ENCODE measurements at regions of chr11 and their contacts with region 1.

Region 1: DNA sequence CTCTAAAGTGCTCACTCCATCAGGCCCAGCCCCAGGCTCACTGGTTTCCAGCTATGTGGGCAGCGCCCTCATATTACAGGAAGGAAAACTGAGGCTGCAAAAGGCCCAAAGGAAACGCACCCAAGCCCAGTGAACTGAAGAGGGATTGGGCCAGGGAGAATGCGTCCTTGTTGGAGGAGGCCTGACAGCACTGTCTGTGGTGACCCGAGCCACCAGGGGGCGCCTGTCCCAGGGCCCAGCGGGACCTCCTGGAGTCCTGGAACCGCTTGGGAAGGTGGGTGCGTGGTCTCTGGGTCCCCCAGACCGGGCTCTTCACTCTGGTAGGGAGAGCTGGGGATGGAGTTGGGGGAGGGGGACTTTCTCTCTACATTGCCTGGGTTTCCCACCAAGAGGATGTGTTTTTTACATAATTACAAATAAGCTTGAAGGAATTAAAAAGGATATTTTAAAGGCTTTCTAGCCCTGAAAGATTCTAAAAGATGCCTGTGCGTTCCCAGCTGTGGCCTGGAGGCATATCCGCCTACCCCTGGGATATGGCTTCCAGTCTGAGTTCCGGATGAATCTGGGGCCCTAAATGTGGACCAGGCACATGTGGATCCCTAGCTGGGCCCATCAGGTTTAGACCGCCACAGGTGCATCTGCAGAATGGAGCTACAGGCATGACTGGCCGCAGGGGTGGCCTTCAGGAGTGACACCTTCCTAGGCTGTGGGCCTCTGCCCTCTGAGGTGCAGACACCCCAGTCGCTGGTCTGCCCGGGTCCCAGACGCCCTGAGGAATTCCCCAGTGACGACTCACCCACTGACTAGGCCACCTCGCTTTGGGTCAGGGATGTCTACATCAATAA is 4.2 kb downstream of the SPI1 start:
- DNase-seq: peak; percentile 49 to 93
- H3K4me3 ChIP-seq: no peak overlapping the region
- H3K27ac ChIP-seq: no peak overlapping the region
- H3K4me1 ChIP-seq: peaks cover 0 to 5% (median 2%) of the 10 kb centered on the region in 4 experiments; a peak in 5 of 7 replicates
- H3K27me3 ChIP-seq: no peaks in the 10 kb centered on the region
- CTCF ChIP-seq: peak; percentile 90 to 97 (median 94)
- EP300 ChIP-seq: no peak
- POLR2A ChIP-seq: no peak
- RAD21 ChIP-seq: peak; percentile 60 to 73

Region 2: GRCh38 chr11:47348859-47349258 is 25.2 kb before region 1 on chr11:
- CTCF ChIA-PET with region 1: interaction called, 24 read pairs
- POLR2A ChIA-PET with region 1: no interaction called
- DNase-seq: no peak
- H3K4me3 ChIP-seq: no peak overlapping the region
- H3K27ac ChIP-seq: no peak overlapping the region
- H3K4me1 ChIP-seq: peaks cover 0 to 12% (median 5%) of the 10 kb centered on the region in 4 experiments; a peak in 6 of 7 replicates
- H3K27me3 ChIP-seq: no peaks in the 10 kb centered on the region
- CTCF ChIP-seq: peak in 2 of 3 experiments; percentile 26 to 37; a peak in 3 of 4 replicates
- EP300 ChIP-seq: no peak
- POLR2A ChIP-seq: no peak
- RAD21 ChIP-seq: peak; percentile 40 to 54; a peak in 3 of 4 replicates

Region 3: DNA sequence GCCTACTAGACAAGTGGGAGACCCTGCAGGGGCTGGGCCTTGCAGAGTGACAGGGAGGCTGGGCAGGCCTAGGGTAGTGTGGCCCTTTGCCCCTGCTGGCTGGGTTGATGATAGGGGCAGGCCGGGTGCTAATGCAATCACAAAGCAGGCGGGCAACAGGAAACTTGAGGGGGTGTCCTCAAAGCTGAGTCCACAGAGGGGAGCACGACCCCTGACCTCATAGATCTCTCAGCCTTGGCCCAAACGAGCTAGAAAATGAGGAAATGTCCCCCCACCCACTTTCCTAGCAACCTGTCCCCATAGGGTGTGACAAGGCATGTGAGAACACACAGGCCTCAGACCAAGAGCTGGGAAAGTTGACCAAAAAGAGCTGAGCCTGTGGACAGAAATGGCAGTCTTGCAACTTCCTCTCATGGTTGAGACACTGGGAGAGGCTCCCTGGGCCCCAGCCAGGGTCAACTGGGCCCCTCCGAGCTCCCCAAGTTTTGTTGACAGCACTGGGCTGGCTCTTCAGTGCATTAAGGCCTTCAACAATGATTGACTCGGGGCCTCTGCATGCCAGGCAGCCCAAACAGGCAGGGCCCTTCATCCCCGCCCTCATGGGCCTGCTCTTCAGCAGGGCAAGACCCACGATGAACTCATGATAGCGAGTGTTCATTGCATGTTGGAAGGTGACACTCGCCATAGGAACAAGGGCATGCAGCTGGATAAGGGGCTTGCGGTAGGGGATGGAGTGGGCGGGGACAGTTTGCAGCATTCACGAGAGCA is 14.0 kb after region 1 on chr11:
- CTCF ChIA-PET with region 1: interaction called, 78 read pairs
- POLR2A ChIA-PET with region 1: interaction called, 4 read pairs
- DNase-seq: no peak
- H3K4me3 ChIP-seq: no peak overlapping the region
- H3K27ac ChIP-seq: no peak overlapping the region; the same call in 1 of the 2 replicates
- H3K4me1 ChIP-seq: peaks cover 0 to 3% (median 0%) of the 10 kb centered on the region in 4 experiments; a peak in 2 of 7 replicates
- H3K27me3 ChIP-seq: no peaks in the 10 kb centered on the region
- CTCF ChIP-seq: no peak
- EP300 ChIP-seq: no peak
- POLR2A ChIP-seq: no peak
- RAD21 ChIP-seq: no peak

Region 4: GRCh38 chr11:47394322-47395222 is 20.5 kb after region 1 on chr11:
- CTCF ChIA-PET with region 1: interaction called, 78 read pairs
- POLR2A ChIA-PET with region 1: interaction called, 4 read pairs
- DNase-seq: no peak
- H3K4me3 ChIP-seq: no peak overlapping the region
- H3K27ac ChIP-seq: no peak overlapping the region
- H3K4me1 ChIP-seq: peaks cover 0 to 7% (median 3%) of the 10 kb centered on the region in 4 experiments; a peak in 4 of 7 replicates
- H3K27me3 ChIP-seq: no peaks in the 10 kb centered on the region
- CTCF ChIP-seq: no peak
- EP300 ChIP-seq: no peak
- POLR2A ChIP-seq: no peak
- RAD21 ChIP-seq: no peak

Region 5: GRCh38 chr11:47399860-47400767 is 26.0 kb after region 1 on chr11:
- CTCF ChIA-PET with region 1: interaction called, 78 read pairs
- POLR2A ChIA-PET with region 1: interaction called, 3 read pairs
- DNase-seq: no peak
- H3K4me3 ChIP-seq: peak overlapping the region; percentile 34 to 58 (median 46)
- H3K27ac ChIP-seq: peak overlapping the region; percentile 35; the same call in 1 of the 2 replicates
- H3K4me1 ChIP-seq: peaks cover 7 to 17% (median 7%) of the 10 kb centered on the region in 4 experiments
- H3K27me3 ChIP-seq: no peaks in the 10 kb centered on the region
- CTCF ChIP-seq: no peak
- EP300 ChIP-seq: no peak
- POLR2A ChIP-seq: peak in 1 of 2 experiments; percentile 32; a peak in 1 of 3 replicates
- RAD21 ChIP-seq: no peak

Region 6: DNA sequence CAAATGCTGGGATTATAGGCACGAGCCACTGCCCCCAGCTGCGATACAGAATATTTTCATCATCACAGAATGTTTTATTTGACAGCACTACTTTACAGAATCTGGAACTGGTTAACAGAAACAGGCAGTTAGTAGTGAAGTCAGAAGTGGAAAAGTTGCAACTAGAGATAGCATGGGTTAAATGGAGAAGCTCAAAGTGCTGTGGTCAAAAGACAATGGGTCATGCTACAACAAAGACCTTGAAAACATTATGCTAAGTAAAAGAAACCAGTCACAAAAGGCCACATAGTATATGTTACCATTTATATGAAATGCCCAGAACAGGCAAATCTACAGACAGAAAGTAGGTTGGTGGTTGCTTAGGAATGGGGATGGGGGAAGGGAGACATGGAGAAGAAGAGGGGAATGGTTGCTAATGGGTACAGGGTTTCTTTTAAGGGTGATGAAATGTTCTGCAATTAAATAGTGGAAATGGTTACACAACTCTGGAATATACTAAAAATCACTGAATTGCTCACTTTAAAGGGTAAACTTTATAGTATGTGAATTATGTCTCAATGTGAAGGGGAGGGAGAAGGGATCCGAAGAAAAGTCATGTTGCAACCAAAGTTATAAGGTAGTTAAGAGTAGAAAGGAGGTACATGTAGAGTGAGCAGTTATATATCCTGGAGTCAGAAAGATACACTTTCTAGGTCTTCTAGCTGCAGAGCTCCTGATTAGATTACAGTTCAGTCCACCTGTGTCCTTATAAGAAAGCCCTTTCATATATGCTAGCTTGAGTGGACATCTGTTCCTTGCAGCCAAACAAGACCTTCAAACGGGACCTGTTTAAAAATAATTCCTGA is 121.1 kb after region 1 on chr11:
- CTCF ChIA-PET with region 1: no interaction called
- POLR2A ChIA-PET with region 1: no interaction called
- DNase-seq: no peak
- H3K4me3 ChIP-seq: no peak overlapping the region
- H3K27ac ChIP-seq: no peak overlapping the region
- H3K4me1 ChIP-seq: peaks cover 0 to 10% (median 0%) of the 10 kb centered on the region in 4 experiments; a peak in 4 of 7 replicates
- H3K27me3 ChIP-seq: no peaks in the 10 kb centered on the region
- CTCF ChIP-seq: no peak
- EP300 ChIP-seq: no peak
- POLR2A ChIP-seq: no peak
- RAD21 ChIP-seq: no peak

Region 7: DNA sequence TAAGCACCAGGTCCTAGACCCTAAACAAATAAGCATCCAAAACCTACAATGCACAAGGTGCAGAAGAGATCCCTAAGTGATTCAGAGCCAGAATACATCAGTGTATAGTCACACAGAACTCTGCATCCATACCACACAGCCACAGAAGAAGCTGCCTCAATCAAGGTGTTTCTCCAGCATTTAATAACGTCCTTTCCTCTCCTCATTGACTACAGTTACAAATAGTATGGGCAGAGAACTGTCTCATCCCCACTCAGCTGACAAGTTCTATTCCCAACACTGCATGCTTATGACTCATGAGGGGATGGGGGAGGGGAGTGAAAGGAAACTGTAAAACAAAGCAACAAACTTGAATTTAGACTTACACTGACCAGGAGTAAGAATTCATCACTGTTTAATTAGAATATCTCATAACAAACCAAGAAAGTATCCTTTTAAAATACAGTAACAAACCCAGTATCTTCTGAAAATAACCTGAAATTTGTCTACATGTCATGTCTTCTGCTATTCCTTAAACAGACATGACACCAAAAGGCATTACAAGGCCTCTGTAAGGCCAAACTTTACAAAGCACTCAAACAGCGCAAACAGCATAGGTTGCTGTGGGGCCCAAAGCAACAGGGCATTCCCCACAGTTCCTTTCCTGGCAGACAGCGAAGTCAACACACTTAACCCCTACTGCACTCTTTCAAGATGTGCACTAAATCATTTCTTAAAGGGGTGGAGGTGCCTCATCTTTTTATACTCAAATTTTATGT is 149.5 kb after region 1 on chr11:
- CTCF ChIA-PET with region 1: no interaction called
- POLR2A ChIA-PET with region 1: no interaction called
- DNase-seq: no peak
- H3K4me3 ChIP-seq: no peak overlapping the region
- H3K27ac ChIP-seq: no peak overlapping the region
- H3K4me1 ChIP-seq: peaks cover 0 to 16% (median 13%) of the 10 kb centered on the region in 4 experiments; a peak in 5 of 7 replicates
- H3K27me3 ChIP-seq: no peaks in the 10 kb centered on the region
- CTCF ChIP-seq: no peak
- EP300 ChIP-seq: no peak
- POLR2A ChIP-seq: no peak
- RAD21 ChIP-seq: no peak

Region 8: DNA sequence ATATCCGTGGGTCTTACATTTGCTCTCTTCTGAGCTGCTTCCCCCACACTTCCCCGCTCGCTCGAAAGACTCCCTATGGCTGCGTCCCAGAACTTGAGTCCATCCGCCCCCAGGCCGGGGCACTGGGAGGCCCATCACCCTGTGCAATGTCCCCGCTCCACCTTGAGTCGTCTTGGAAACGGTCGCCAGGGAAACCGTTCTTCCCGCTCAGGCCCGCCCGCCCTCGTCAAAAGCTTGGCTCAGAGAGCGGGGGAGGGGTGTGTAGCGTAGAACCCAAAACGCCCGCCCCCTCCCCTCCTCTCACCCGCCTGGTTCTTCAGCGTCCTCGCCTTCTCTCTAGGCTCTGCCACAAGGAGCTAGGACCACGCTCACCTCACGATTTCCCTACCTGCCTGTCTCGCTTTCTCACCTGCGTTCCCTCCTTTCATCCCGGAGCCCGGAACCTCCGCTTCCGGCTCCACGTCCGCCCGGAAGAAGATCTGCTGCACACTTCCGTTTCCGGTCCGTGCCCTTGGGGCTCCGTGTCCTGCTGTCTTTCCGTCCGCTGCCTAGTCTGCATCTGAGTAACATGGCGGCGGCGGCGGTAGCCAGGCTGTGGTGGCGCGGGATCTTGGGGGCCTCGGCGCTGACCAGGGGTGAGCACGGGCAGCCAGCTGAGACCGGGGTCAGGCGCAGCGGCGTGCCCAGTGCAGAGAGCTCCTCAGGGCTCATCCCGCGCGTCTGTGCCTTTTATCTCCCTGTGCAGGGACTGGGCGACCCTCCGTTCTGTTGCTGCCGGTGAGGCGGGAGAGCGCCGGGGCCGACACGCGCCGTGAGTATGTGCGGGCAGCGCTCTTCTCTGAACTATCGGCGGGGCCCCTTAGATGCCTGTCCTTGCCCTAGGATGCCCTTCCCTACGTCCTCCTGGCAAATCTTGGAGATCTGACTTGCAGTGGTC is 204.7 kb after region 1 on chr11 and contains the starts of genes KBTBD4 and NDUFS3:
- CTCF ChIA-PET with region 1: no interaction called
- POLR2A ChIA-PET with region 1: no interaction called
- DNase-seq: peak; percentile 62 to 96
- H3K4me3 ChIP-seq: peak within 1 kb of the TSS; percentile 83 to 93 (median 90)
- H3K27ac ChIP-seq: peak within 1 kb of the TSS; percentile 97
- H3K4me1 ChIP-seq: peaks cover 0 to 5% (median 2%) of the 10 kb centered on the region in 4 experiments; a peak in 2 of 7 replicates
- H3K27me3 ChIP-seq: no peaks in the 10 kb centered on the region
- CTCF ChIP-seq: no peak
- EP300 ChIP-seq: peak; percentile 35 to 85
- POLR2A ChIP-seq: peak; percentile 38 to 91
- RAD21 ChIP-seq: peak in 1 of 2 experiments; percentile 8; a peak in 1 of 4 replicates
- total RNA-seq, gene KBTBD4: 12.0 and 14.0 TPM in 2 replicates
- total RNA-seq, gene NDUFS3: 135 and 136 TPM in 2 replicates

Measured in H1 (cell line).